K562 (cell line): ENCODE measurements at regions of chr19 and their contacts with region 1.

Region 1: GRCh38 chr19:44770550-44771257 is 7.0 kb upstream of the CBLC start:
- DNase-seq: peak; percentile 97 to 100 (median 99)
- ATAC-seq: peak; percentile 100
- H3K4me3 ChIP-seq: no peak overlapping the region
- H3K27ac ChIP-seq: no peak overlapping the region
- H3K4me1 ChIP-seq: peaks cover 4 to 10% of the 10 kb centered on the region in 2 experiments; a peak in 2 of 5 replicates
- H3K27me3 ChIP-seq: no peaks in the 10 kb centered on the region
- CTCF ChIP-seq: peak; percentile 78 to 97 (median 79)
- EP300 ChIP-seq: no peak
- POLR2A ChIP-seq: no peak
- RAD21 ChIP-seq: peak; percentile 97

Region 2: DNA sequence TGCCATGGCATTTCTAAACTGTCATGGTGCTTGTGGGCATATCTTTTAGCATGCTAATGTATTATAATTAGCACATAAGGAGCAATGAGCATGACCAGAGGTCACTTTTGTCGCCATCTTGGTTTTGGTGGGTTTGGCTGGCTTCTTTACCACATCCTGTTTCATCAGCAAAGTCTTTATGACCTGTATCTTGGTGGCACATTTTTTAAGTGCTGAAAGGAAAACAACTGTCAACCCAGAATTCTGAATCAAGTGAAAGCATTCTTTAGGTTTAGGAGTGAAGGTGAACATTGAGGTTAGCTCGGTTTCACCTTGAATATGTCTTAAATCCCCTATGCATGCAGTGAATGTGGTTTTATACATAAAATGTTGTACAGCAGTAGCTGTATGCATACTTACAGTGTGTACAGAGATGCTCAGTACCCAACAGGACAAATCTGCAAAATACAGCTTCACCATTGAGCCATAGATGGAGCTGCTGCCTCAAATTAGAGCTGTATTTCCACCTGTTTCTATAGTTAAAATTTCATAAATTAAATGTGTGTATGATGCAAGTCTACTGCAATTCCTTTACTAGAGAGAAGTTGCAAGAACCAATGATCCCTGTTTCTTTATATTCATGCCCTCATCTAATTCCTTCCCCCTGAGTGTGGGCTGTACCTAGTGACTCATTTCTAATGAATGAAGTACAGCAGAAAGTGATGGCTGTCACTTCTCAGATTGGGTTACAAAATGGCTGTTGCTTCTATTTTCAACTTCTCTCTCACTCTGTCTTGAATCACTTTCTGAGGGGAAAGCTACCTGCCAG is 182.5 kb before region 1 on chr19:
- CTCF ChIA-PET with region 1: no interaction called
- POLR2A ChIA-PET with region 1: no interaction called
- in situ Hi-C with region 1: no loop called
- intact Hi-C with region 1: loop called (anchors 1 kb)
- DNase-seq: peak in 1 of 4 experiments; percentile 42
- ATAC-seq: peak; percentile 82
- H3K4me3 ChIP-seq: no peak overlapping the region
- H3K27ac ChIP-seq: peak overlapping the region; percentile 91
- H3K4me1 ChIP-seq: peaks cover 34 to 42% of the 10 kb centered on the region in 2 experiments
- H3K27me3 ChIP-seq: no peaks in the 10 kb centered on the region
- CTCF ChIP-seq: peak in 2 of 3 experiments; percentile 20 to 47; a peak in 2 of 6 replicates
- EP300 ChIP-seq: peak; percentile 73
- POLR2A ChIP-seq: no peak
- RAD21 ChIP-seq: peak; percentile 63 to 75

Region 3: DNA sequence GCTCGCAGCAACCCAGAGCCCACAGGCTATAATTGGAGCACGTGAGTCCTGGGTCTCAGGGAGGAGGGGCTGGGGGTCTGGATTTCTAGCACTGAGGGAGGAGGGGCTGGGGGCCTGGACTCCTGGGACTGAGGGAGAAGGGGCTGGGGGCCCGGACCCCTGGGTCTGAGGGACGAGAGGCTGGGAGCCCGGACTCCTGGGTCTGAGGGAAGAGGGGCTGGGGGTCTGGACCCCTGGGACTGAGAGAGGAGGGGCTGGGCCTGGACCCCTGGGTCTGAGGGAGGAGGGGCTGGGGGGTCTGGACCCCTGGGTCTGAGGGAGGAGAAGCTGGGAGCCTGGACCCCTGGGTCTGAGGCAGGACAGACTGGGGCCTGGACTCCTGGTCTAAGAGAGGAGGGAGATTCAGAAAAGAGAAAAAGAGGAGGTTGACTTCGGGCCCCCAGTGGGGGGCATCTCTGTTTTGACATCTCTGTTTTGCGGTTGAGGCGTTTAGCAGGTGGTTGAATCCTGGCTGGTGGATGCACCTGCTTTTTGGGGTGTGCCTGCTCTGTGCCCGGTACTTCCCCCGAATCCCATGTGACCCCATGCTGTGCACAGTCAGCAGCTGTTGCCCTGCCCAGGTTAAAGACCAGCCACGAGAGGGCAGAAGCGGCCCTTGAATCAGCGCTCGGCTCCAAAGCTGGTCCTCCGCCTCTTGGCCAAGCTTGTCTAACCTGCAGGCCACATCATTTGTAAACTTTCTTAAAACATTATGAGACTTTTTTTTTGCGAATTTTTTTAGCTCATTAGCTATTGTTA is 116.5 kb before region 1 on chr19:
- CTCF ChIA-PET with region 1: interaction called, 7 read pairs
- POLR2A ChIA-PET with region 1: no interaction called
- in situ Hi-C with region 1: no loop called
- intact Hi-C with region 1: loop called (anchors 1 kb)
- DNase-seq: peak; percentile 55 to 72 (median 58)
- ATAC-seq: peak; percentile 82
- H3K4me3 ChIP-seq: no peak overlapping the region
- H3K27ac ChIP-seq: no peak overlapping the region
- H3K4me1 ChIP-seq: peaks cover 0 to 13% of the 10 kb centered on the region in 2 experiments; a peak in 2 of 5 replicates
- H3K27me3 ChIP-seq: no peaks in the 10 kb centered on the region
- CTCF ChIP-seq: peak; percentile 78 to 83 (median 79)
- EP300 ChIP-seq: no peak
- POLR2A ChIP-seq: no peak
- RAD21 ChIP-seq: peak; percentile 69 to 70

Region 4: DNA sequence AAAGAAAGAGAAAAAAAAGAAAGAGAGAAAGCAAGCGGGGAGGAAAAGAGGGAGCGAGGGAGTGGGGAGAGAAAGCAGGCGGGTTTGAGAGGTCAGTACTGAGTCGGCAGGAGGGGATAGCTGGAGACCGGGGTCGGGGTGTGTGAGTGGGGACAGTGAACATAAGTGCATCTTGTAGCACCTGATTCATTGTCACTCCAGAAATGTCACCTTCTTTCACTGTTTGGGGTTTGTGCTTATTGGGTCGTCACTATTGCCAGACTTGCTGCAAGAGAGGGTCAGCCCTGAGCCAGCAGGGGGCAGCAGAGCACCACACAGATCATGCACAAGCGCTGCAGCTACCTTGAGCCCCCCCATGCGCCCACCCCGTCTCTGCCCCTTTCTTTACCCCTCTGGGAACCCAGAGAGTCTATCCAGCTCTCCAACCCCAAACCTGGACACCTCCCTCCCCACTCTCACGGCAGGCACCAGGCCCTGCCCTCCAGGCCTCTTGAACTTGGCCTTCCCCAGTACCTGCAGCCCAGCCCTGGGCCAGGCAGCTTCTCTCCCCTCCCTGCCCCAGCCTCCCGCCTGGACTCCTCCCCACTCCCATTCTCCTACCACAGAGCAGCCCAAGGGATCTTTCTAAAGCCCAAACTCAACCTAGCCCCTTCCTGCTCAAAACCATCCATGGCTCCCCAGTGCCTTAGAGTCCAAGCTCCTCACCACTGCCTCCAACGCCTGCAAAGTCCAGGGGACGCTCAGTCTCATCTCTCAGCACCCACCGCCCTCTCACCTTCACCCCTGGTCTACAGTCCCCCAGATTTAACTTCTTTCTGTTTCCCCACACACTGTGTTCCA is 81.4 kb before region 1 on chr19:
- CTCF ChIA-PET with region 1: interaction called, 20 read pairs
- POLR2A ChIA-PET with region 1: interaction called, 3 read pairs
- in situ Hi-C with region 1: no loop called
- intact Hi-C with region 1: loop called (anchors 1 kb)
- DNase-seq: peak; percentile 69 to 84 (median 72)
- ATAC-seq: peak; percentile 90
- H3K4me3 ChIP-seq: no peak overlapping the region
- H3K27ac ChIP-seq: no peak overlapping the region
- H3K4me1 ChIP-seq: peaks cover 17 to 26% of the 10 kb centered on the region in 2 experiments
- H3K27me3 ChIP-seq: no peaks in the 10 kb centered on the region
- CTCF ChIP-seq: peak; percentile 89 to 92 (median 90)
- EP300 ChIP-seq: no peak
- POLR2A ChIP-seq: no peak
- RAD21 ChIP-seq: peak; percentile 83 to 90

Region 5: GRCh38 chr19:44723952-44724319 is 46.8 kb before region 1 on chr19:
- CTCF ChIA-PET with region 1: interaction called, 34 read pairs
- POLR2A ChIA-PET with region 1: interaction called, 16 read pairs
- in situ Hi-C with region 1: loop called (anchors 5 kb)
- intact Hi-C with region 1: loop called (anchors 1 kb)
- DNase-seq: peak; percentile 83 to 88 (median 86)
- ATAC-seq: peak; percentile 94
- H3K4me3 ChIP-seq: no peak overlapping the region
- H3K27ac ChIP-seq: no peak overlapping the region
- H3K4me1 ChIP-seq: peaks cover 20 to 23% of the 10 kb centered on the region in 2 experiments
- H3K27me3 ChIP-seq: no peaks in the 10 kb centered on the region
- CTCF ChIP-seq: peak; percentile 94 to 98 (median 98)
- EP300 ChIP-seq: no peak
- POLR2A ChIP-seq: no peak
- RAD21 ChIP-seq: peak; percentile 98 to 99